B cell (primary cell): ENCODE measurements at regions of chr10 and their contacts with region 1.

Region 1: DNA sequence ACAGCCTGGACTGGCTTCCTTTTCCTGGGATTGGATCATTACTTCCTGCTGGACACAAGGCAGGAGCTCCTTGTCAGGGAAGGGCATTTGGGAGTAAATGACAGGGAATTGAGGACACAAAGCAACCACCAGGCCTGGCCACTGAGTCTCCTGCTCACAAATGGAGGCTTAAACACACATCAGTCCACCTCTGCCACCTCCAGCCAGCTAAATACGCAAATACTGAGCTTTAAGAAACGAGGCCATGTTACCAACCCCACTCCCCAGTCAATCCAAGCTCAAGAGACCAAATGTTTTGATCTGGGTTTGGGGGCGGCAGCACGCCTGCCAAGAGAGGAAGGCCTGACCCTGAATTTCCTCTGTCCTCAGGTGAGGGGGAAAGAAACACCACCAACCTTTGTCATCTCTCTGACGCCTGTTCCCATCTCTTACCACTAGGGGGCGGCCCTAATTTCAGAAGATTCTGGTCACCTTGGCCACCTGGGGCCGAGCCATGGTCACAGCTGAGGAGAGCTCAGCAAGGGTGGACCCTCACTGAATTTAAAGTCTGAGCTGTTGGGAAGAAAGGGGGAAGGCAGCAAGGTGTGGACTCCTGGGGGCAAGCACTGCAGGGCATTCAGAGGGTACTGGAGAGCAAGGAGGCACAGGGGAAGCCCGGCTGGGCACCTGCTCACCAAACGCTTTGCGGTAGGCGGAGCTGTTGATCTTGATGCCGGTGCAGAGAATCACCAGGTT is 16.5 kb downstream of the AIFM2 start:
- DNase-seq: peak; percentile 71
- ATAC-seq: peak; percentile 83
- H3K4me3 ChIP-seq: no peak overlapping the region
- H3K4me3 Mint-ChIP-seq: no peak overlapping the region
- H3K27ac ChIP-seq: no peak overlapping the region
- H3K27ac Mint-ChIP-seq: no peak overlapping the region
- H3K4me1 ChIP-seq: peaks cover 0 to 4% of the 10 kb centered on the region in 2 donors
- H3K4me1 Mint-ChIP-seq: peaks cover 6% of the 10 kb centered on the region
- H3K27me3 ChIP-seq: no peaks in the 10 kb centered on the region
- H3K27me3 Mint-ChIP-seq: no peaks in the 10 kb centered on the region
- CTCF ChIP-seq: peak; percentile 98

Region 2: GRCh38 chr10:70132098-70133029 is 16.2 kb after region 1 on chr10 and contains the start of gene AIFM2:
- CTCF ChIA-PET with region 1: interaction called, 13 read pairs
- POLR2A ChIA-PET with region 1: no interaction called
- intact Hi-C with region 1: no loop called
- DNase-seq: peak; percentile 57
- ATAC-seq: peak; percentile 79
- H3K4me3 ChIP-seq: peak within 1 kb of the TSS in 4 of 5 experiments; percentile 54 to 92 (median 66)
- H3K4me3 Mint-ChIP-seq: peak within 1 kb of the TSS; percentile 89
- H3K27ac ChIP-seq: peak within 1 kb of the TSS in 1 of 2 donors; percentile 61
- H3K27ac Mint-ChIP-seq: peak within 1 kb of the TSS; percentile 84
- H3K4me1 ChIP-seq: peaks cover 11 to 15% of the 10 kb centered on the region in 2 donors
- H3K4me1 Mint-ChIP-seq: peaks cover 19% of the 10 kb centered on the region
- H3K27me3 ChIP-seq: peaks cover 0 to 7% (median 0%) of the 10 kb centered on the region in 4 experiments
- H3K27me3 Mint-ChIP-seq: no peaks in the 10 kb centered on the region
- CTCF ChIP-seq: no peak
- total RNA-seq, gene AIFM2: 8.1 and 9.3 TPM in 2 replicates

Region 3: DNA sequence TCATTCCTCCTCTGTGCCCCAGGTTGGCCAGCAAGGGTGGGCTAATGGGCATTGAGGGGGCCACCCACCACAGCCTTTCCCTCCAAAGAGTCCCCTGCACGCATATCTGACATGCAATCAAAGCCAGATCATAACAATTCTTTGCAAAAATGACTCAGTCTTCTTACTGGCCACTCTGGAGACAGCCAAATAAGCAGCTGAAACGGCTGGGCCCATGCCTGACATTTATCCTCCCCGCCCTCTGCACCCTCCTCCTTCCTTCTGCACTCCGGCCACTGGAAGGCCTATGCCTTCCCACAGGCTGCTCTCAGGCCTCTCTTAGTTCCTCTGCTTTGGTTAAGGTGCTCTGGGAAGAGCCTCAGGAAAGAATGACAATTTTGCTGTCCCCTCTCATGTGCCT is 196.9 kb after region 1 on chr10:
- CTCF ChIA-PET with region 1: no interaction called
- POLR2A ChIA-PET with region 1: no interaction called
- intact Hi-C with region 1: no loop called
- DNase-seq: no peak
- ATAC-seq: no peak
- H3K4me3 ChIP-seq: no peak overlapping the region
- H3K4me3 Mint-ChIP-seq: no peak overlapping the region
- H3K27ac ChIP-seq: no peak overlapping the region
- H3K27ac Mint-ChIP-seq: no peak overlapping the region
- H3K4me1 ChIP-seq: peaks cover 5 to 21% of the 10 kb centered on the region in 2 donors
- H3K4me1 Mint-ChIP-seq: peaks cover 16% of the 10 kb centered on the region
- H3K27me3 ChIP-seq: peaks cover 0 to 6% (median 3%) of the 10 kb centered on the region in 4 experiments
- H3K27me3 Mint-ChIP-seq: no peaks in the 10 kb centered on the region
- CTCF ChIP-seq: no peak